ENCODE measurements at regions of chr7 and their contacts with region 1.

Region 1: GRCh38 chr7:80611775-80612174 is 26.7 kb upstream of the CD36 start:
- DNase-seq: peak; percentile 95
- ATAC-seq: peak; percentile 98
- H3K4me3 ChIP-seq: no peak overlapping the region; a peak in 2 of 6 replicates
- H3K27ac ChIP-seq: peak overlapping the region; percentile 52
- H3K4me1 ChIP-seq: peaks cover 58% of the 10 kb centered on the region
- H3K27me3 ChIP-seq: no peaks in the 10 kb centered on the region
- CTCF ChIP-seq: no peak
- EP300 ChIP-seq: peak in 1 of 2 experiments; percentile 94; a peak in 3 of 4 replicates
- POLR2A ChIP-seq: no peak
- RAD21 ChIP-seq: no peak

Region 2: GRCh38 chr7:79923953-79924352 is 687.8 kb before region 1 on chr7:
- CTCF ChIA-PET with region 1: no interaction called
- POLR2A ChIA-PET with region 1: no interaction called
- in situ Hi-C with region 1: no loop called
- intact Hi-C with region 1: no loop called
- DNase-seq: no peak
- ATAC-seq: no peak
- H3K4me3 ChIP-seq: no peak overlapping the region
- H3K27ac ChIP-seq: no peak overlapping the region
- H3K4me1 ChIP-seq: peaks cover 1% of the 10 kb centered on the region; the same call in 1 of the 2 replicates
- H3K27me3 ChIP-seq: no peaks in the 10 kb centered on the region
- CTCF ChIP-seq: no peak
- EP300 ChIP-seq: no peak
- POLR2A ChIP-seq: no peak
- RAD21 ChIP-seq: no peak

Region 3: GRCh38 chr7:80643336-80643915 is 31.7 kb after region 1 on chr7:
- CTCF ChIA-PET with region 1: no interaction called
- POLR2A ChIA-PET with region 1: no interaction called
- in situ Hi-C with region 1: no loop called
- intact Hi-C with region 1: loop called (anchors 2 kb)
- DNase-seq: no peak
- ATAC-seq: no peak
- H3K4me3 ChIP-seq: no peak overlapping the region
- H3K27ac ChIP-seq: no peak overlapping the region
- H3K4me1 ChIP-seq: peaks cover 24% of the 10 kb centered on the region
- H3K27me3 ChIP-seq: no peaks in the 10 kb centered on the region
- CTCF ChIP-seq: no peak
- EP300 ChIP-seq: no peak
- POLR2A ChIP-seq: no peak
- RAD21 ChIP-seq: no peak

Region 4: DNA sequence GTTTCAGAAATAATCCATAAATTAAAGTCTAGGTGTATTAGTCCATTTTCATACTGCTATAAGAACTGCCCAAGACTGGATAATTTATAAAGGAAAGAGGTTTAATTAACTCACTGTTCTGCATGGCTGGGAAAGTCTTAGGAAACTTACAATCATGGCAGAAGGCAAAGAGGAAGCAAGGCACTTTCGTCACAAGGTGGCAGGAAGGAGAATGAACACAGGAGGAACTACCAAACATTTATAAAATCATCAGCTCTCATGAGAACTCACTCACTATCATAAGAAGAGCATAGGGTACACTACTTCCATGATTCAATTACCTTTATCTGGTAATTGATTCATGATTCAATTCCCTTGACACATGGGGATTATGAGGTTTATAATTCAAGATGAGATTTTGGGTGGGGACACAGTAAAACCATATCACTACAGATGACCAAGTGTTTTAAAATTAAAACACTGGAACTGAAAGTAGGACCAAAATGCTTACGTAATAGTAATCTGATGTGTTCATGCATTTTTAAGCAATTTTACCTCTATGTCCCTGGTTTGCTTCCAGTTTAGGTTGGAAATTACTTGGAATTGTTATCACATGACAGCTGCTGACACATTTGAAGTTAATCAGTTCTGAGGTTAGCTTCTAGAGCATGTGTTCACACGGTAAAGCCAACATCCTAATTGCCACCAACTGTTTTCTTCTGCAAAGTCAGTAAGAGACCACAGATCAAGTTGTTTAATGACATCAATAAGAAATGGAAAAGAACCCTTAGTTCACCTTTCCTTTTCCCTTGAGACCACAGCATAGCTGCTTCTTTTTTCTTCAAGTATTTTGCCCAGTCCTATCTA is 355.5 kb after region 1 on chr7:
- CTCF ChIA-PET with region 1: no interaction called
- POLR2A ChIA-PET with region 1: no interaction called
- in situ Hi-C with region 1: no loop called
- intact Hi-C with region 1: no loop called
- DNase-seq: no peak
- ATAC-seq: no peak
- H3K4me3 ChIP-seq: no peak overlapping the region
- H3K27ac ChIP-seq: no peak overlapping the region
- H3K4me1 ChIP-seq: no peaks in the 10 kb centered on the region
- H3K27me3 ChIP-seq: no peaks in the 10 kb centered on the region
- CTCF ChIP-seq: no peak
- EP300 ChIP-seq: no peak
- POLR2A ChIP-seq: no peak
- RAD21 ChIP-seq: no peak

Region 5: DNA sequence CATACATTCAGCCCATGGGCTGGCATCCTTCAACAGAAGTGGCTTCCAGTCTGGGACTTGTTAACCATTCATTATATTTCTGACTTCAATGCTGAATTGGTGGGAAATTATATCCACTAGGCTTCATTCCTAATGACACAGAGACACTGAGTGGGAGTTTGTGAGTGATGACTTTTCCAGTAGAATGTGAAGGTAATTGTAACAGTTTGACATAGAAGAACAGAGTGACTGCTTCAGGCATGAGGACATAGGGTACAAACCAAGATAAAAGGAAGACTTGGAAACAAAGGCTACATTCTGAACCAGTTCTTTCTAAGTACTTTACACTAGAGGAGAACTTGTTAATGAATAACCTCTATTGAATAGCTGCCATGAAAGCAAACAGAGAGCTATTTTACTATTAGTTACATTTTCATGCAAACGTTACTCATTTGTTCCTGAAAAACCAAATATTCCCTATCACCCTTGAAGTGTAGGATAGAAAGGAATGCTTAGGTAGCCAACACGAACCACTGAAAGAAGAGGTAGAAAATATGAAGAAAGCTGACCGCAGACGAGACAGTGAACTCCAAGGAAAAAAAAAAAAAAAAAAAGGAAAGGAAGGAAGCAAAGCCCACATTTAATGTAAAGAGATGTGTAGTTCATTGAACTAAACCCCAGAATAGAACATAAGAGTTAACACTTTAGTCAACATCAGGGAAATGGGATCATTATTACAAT is 544.0 kb after region 1 on chr7:
- CTCF ChIA-PET with region 1: no interaction called
- POLR2A ChIA-PET with region 1: no interaction called
- in situ Hi-C with region 1: no loop called
- intact Hi-C with region 1: loop called (anchors 1 kb)
- DNase-seq: peak; percentile 98
- ATAC-seq: peak; percentile 98
- H3K4me3 ChIP-seq: peak overlapping the region in 1 of 3 experiments; percentile 1; a peak in 1 of 6 replicates
- H3K27ac ChIP-seq: peak overlapping the region; percentile 81
- H3K4me1 ChIP-seq: peaks cover 71% of the 10 kb centered on the region
- H3K27me3 ChIP-seq: no peaks in the 10 kb centered on the region
- CTCF ChIP-seq: peak; percentile 50; the same call in 1 of the 2 replicates
- EP300 ChIP-seq: peak in 1 of 2 experiments; percentile 86; a peak in 2 of 4 replicates
- POLR2A ChIP-seq: no peak
- RAD21 ChIP-seq: no peak